ENCODE measurements at regions of chr20 and their contacts with region 1.

Region 1: DNA sequence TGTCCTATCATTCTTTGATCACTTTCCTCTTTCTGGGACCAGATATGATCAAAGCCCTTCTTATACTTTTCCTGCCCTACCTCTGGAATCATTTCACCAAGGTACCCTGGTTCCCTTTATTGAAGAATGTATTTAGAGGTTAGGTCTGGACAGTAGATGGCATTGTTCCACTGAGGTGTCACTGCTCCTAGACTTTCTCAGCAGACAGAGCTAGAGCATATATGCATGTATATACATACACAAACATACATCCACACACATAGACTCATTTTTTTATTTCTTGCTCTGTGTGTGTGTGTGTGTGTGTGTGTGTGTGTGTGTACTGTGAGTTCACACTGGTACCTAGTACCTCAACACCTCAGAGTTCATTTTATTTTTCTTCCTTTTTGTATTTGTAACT is 40.9 kb downstream of the PTPRA start:
- DNase-seq: peak; percentile 50
- ATAC-seq: peak; percentile 83
- H3K4me3 ChIP-seq: no peak overlapping the region
- H3K27ac ChIP-seq: no peak overlapping the region
- H3K4me1 ChIP-seq: peaks cover 7% of the 10 kb centered on the region
- H3K27me3 ChIP-seq: no peaks in the 10 kb centered on the region
- CTCF ChIP-seq: peak; percentile 55; the same call in 1 of the 2 replicates

Region 2: GRCh38 chr20:2822073-2822472 is 92.1 kb before region 1 on chr20:
- CTCF ChIA-PET with region 1: no interaction called
- POLR2A ChIA-PET with region 1: no interaction called
- intact Hi-C with region 1: no loop called
- DNase-seq: no peak
- ATAC-seq: no peak
- H3K4me3 ChIP-seq: no peak overlapping the region
- H3K27ac ChIP-seq: no peak overlapping the region
- H3K4me1 ChIP-seq: no peaks in the 10 kb centered on the region
- H3K27me3 ChIP-seq: peaks cover 3% of the 10 kb centered on the region; the same call in 1 of the 2 replicates
- CTCF ChIP-seq: no peak

Region 3: GRCh38 chr20:3000852-3001523 is 86.8 kb after region 1 on chr20:
- CTCF ChIA-PET with region 1: interaction called, 9 read pairs
- POLR2A ChIA-PET with region 1: no interaction called
- intact Hi-C with region 1: loop called (anchors 1 kb)
- DNase-seq: peak; percentile 82
- ATAC-seq: peak; percentile 86
- H3K4me3 ChIP-seq: no peak overlapping the region
- H3K27ac ChIP-seq: no peak overlapping the region
- H3K4me1 ChIP-seq: no peaks in the 10 kb centered on the region
- H3K27me3 ChIP-seq: no peaks in the 10 kb centered on the region
- CTCF ChIP-seq: peak; percentile 77